ENCODE measurements at regions of chr2 and their contacts with region 1.

Region 1: GRCh38 chr2:155958834-155959233 is 373.7 kb downstream of the NR4A2 start:
- DNase-seq: no peak
- ATAC-seq: no peak
- H3K4me3 ChIP-seq: no peak overlapping the region
- H3K27ac ChIP-seq: no peak overlapping the region
- H3K4me1 ChIP-seq: no peaks in the 10 kb centered on the region
- H3K27me3 ChIP-seq: no peaks in the 10 kb centered on the region
- CTCF ChIP-seq: no peak
- POLR2A ChIP-seq: no peak
- RAD21 ChIP-seq: no peak

Region 2: GRCh38 chr2:156110890-156111289 is 152.1 kb after region 1 on chr2:
- CTCF ChIA-PET with region 1: no interaction called
- POLR2A ChIA-PET with region 1: interaction called, 17 read pairs
- dilution Hi-C with region 1: no loop called
- in situ Hi-C with region 1: no loop called
- intact Hi-C with region 1: no loop called
- DNase-seq: no peak
- ATAC-seq: no peak
- H3K4me3 ChIP-seq: no peak overlapping the region
- H3K27ac ChIP-seq: no peak overlapping the region
- H3K4me1 ChIP-seq: no peaks in the 10 kb centered on the region
- H3K27me3 ChIP-seq: no peaks in the 10 kb centered on the region
- CTCF ChIP-seq: no peak
- POLR2A ChIP-seq: no peak
- RAD21 ChIP-seq: no peak